ENCODE measurements at regions of chr1 and their contacts with region 1.

Region 1: GRCh38 chr1:110460253-110461220 is 9.6 kb downstream of the PROK1 start:
- DNase-seq: peak in 1 of 2 experiments; percentile 93
- H3K4me3 ChIP-seq: no peak overlapping the region
- H3K27ac ChIP-seq: no peak overlapping the region
- H3K4me1 ChIP-seq: no peaks in the 10 kb centered on the region
- H3K27me3 ChIP-seq: no peaks in the 10 kb centered on the region
- CTCF ChIP-seq: peak; percentile 87 to 97 (median 95)
- EP300 ChIP-seq: no peak
- POLR2A ChIP-seq: no peak
- RAD21 ChIP-seq: peak; percentile 100

Region 2: GRCh38 chr1:110188035-110188618 is 272.4 kb before region 1 on chr1:
- CTCF ChIA-PET with region 1: interaction called, 14 read pairs
- POLR2A ChIA-PET with region 1: no interaction called
- DNase-seq: no peak
- H3K4me3 ChIP-seq: no peak overlapping the region
- H3K27ac ChIP-seq: no peak overlapping the region
- H3K4me1 ChIP-seq: peaks cover 0 to 2% (median 0%) of the 10 kb centered on the region in 4 experiments; a peak in 1 of 7 replicates
- H3K27me3 ChIP-seq: no peaks in the 10 kb centered on the region
- CTCF ChIP-seq: no peak
- EP300 ChIP-seq: no peak
- POLR2A ChIP-seq: no peak
- RAD21 ChIP-seq: no peak

Region 3: GRCh38 chr1:110312188-110313121 is 148.1 kb before region 1 on chr1:
- CTCF ChIA-PET with region 1: interaction called, 30 read pairs
- POLR2A ChIA-PET with region 1: no interaction called
- DNase-seq: peak; percentile 25 to 84
- H3K4me3 ChIP-seq: peak overlapping the region in 3 of 4 experiments; percentile 6 to 46 (median 29); a peak in 5 of 8 replicates
- H3K27ac ChIP-seq: no peak overlapping the region
- H3K4me1 ChIP-seq: peaks cover 0 to 7% (median 4%) of the 10 kb centered on the region in 4 experiments; a peak in 5 of 7 replicates
- H3K27me3 ChIP-seq: no peaks in the 10 kb centered on the region; a peak in 1 of 7 replicates
- CTCF ChIP-seq: peak; percentile 97 to 98 (median 98)
- EP300 ChIP-seq: no peak
- POLR2A ChIP-seq: no peak
- RAD21 ChIP-seq: peak; percentile 97 to 98

Region 4: GRCh38 chr1:110407260-110408210 is 53.0 kb before region 1 on chr1 and contains the start of gene LAMTOR5:
- CTCF ChIA-PET with region 1: interaction called, 828 read pairs
- POLR2A ChIA-PET with region 1: interaction called, 6 read pairs
- DNase-seq: peak; percentile 67 to 91
- H3K4me3 ChIP-seq: peak within 1 kb of the TSS; percentile 78 to 90 (median 83)
- H3K27ac ChIP-seq: peak within 1 kb of the TSS; percentile 76
- H3K4me1 ChIP-seq: no peaks in the 10 kb centered on the region; a peak in 2 of 7 replicates
- H3K27me3 ChIP-seq: 0 out of 7 replicates have a peak, but pooled peaks cover 0 to 3% (median 0%) of the 10 kb centered on the region in 4 experiments
- CTCF ChIP-seq: no peak
- EP300 ChIP-seq: no peak
- POLR2A ChIP-seq: peak; percentile 68 to 91
- RAD21 ChIP-seq: 0 out of 4 replicates have a peak, but pooled peaks of 1 of the 2 experiments have one; percentile 0
- total RNA-seq, gene LAMTOR5: 84.4 and 91.9 TPM in 2 replicates

Region 5: GRCh38 chr1:110477041-110477440 is 16.5 kb after region 1 on chr1:
- CTCF ChIA-PET with region 1: interaction called, 31 read pairs
- POLR2A ChIA-PET with region 1: interaction called, 3 read pairs
- DNase-seq: no peak
- H3K4me3 ChIP-seq: no peak overlapping the region
- H3K27ac ChIP-seq: no peak overlapping the region
- H3K4me1 ChIP-seq: peaks cover under 1 to 8% (median 2%) of the 10 kb centered on the region in 4 experiments; a peak in 6 of 7 replicates
- H3K27me3 ChIP-seq: no peaks in the 10 kb centered on the region; a peak in 2 of 7 replicates
- CTCF ChIP-seq: no peak
- EP300 ChIP-seq: no peak
- POLR2A ChIP-seq: no peak
- RAD21 ChIP-seq: no peak

Region 6: DNA sequence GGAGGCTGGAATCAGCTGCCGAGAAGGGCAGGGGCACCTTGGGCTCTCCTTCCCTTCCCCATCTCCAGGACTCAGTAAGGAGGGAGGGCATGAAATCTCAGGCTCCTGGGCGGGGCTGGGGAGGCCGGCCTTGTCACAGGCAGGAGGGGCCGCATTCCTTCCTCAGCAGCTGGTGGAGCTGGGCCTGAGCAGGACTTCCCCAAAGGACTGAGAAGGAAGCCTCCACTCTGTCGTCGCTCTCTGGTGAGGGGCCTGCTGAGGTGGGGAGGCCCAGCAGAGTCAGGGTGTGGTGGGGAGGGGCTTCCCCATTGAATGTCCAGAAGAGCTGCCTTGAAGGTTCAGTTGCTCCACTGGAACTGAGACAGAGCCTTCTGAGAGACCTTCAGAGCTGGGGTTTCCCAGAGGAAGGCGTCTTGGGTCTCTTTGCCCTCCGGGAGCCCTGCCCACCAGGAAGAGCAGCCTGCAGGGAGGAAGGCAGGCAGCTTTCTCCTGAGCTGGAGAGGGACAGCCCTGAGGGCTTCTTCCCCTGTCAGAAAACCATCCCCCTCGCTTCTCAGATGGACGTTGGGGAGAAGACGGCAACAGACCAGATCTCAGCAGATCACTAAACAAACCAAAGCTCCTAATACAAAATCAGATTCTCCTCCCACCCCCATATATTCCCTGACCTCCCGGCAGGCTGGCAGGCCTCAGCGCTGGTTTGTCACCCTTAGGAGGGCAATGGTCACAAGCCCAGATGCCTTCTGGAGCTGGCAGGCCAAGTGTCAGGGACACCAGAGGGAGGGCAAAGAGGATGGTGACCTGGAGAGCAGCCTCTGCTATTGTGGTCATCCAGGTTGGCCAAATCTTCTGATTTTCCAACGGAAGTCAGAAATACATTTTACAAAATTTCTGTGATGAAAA is 47.8 kb after region 1 on chr1:
- CTCF ChIA-PET with region 1: interaction called, 15 read pairs
- POLR2A ChIA-PET with region 1: no interaction called
- DNase-seq: peak in 1 of 2 experiments; percentile 58
- H3K4me3 ChIP-seq: no peak overlapping the region
- H3K27ac ChIP-seq: no peak overlapping the region
- H3K4me1 ChIP-seq: peaks cover 0 to 7% (median 2%) of the 10 kb centered on the region in 4 experiments; a peak in 3 of 7 replicates
- H3K27me3 ChIP-seq: no peaks in the 10 kb centered on the region; a peak in 1 of 7 replicates
- CTCF ChIP-seq: no peak
- EP300 ChIP-seq: no peak
- POLR2A ChIP-seq: no peak
- RAD21 ChIP-seq: no peak

Region 7: GRCh38 chr1:110663241-110663640 is 202.7 kb after region 1 on chr1:
- CTCF ChIA-PET with region 1: no interaction called
- POLR2A ChIA-PET with region 1: no interaction called
- DNase-seq: no peak
- H3K4me3 ChIP-seq: no peak overlapping the region
- H3K27ac ChIP-seq: no peak overlapping the region
- H3K4me1 ChIP-seq: no peaks in the 10 kb centered on the region
- H3K27me3 ChIP-seq: no peaks in the 10 kb centered on the region; a peak in 1 of 7 replicates
- CTCF ChIP-seq: no peak
- EP300 ChIP-seq: no peak
- POLR2A ChIP-seq: no peak
- RAD21 ChIP-seq: no peak

Measured in H1 (cell line).